CD14-positive monocyte (primary cell): ENCODE measurements at regions of chr19 and their contacts with region 1.

Region 1: DNA sequence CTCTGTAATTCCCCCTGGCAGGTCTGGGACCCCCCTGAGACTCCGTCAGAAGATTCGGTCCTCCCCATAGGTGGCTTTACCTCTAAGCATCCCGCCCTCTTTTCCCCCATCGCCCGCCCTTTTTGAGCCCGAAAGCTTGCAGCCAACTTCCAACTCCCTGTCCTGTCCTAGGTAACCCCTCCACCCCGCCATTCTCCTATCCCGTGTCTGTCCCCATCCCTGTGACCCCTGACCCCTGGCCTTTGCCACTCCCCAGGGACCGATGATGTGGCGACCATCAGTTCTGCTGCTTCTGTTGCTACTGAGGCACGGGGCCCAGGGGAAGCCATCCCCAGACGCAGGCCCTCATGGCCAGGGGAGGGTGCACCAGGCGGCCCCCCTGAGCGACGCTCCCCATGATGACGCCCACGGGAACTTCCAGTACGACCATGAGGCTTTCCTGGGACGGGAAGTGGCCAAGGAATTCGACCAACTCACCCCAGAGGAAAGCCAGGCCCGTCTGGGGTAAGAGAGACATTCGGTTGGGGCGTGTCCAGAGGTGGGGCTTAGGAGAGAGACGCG is 488 bp downstream of the RCN3 start:
- DNase-seq: no peak
- H3K4me3 ChIP-seq: peak overlapping the region in 1 of 3 experiments; percentile 65
- H3K4me3 Mint-ChIP-seq: peak overlapping the region; percentile 62 to 82
- H3K27ac ChIP-seq: no peak overlapping the region
- H3K27ac Mint-ChIP-seq: peak overlapping the region in 2 of 7 donors; percentile 9 to 46
- H3K4me1 ChIP-seq: peaks cover 14 to 20% of the 10 kb centered on the region in 2 donors
- H3K4me1 Mint-ChIP-seq: peaks cover 19% of the 10 kb centered on the region
- H3K27me3 ChIP-seq: no peaks in the 10 kb centered on the region
- H3K27me3 Mint-ChIP-seq: peaks cover 2 to 33% (median 16%) of the 10 kb centered on the region in 3 donors
- CTCF ChIP-seq: no peak

Region 2: DNA sequence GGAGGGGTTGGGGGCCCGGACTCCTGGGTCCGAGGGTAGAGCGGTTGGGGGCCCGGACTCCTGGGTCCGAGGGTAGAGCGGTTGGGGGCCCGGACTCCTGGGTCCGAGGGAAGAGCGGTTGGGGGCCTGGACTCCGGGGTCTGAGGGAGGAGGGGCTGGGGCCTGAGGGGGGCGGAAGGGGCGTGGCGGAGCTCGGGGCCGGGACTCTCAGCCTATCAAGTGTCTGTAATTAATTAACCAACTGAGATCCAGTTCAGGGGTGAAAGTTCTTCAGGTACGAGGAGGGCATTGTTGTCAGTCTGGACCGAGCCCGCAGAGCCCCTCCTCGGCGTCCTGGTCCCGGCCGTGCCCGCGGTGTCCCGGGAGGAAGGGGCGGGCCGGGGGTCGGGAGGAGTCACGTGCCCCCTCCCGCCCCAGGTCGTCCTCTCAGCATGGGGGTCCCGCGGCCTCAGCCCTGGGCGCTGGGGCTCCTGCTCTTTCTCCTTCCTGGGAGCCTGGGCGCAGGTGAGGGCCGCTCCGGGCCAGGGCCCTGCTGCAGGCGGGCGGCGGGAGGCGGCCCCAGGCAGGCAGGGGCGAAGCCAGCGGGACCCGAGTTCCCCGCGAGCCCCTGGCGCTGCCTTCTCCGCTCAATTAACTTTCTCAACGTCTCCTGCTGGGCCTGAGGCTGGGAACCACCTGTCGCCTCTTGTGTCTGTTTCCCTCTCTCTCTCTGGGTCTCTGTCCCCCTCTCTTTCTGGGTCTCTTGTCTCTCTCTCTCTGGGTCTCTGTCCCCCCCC is 15.1 kb before region 1 on chr19:
- intact Hi-C with region 1: loop called in 1 of 2 experiments (anchors 2 kb)
- DNase-seq: no peak
- H3K4me3 ChIP-seq: peak overlapping the region; percentile 84 to 99 (median 90)
- H3K4me3 Mint-ChIP-seq: peak overlapping the region; percentile 96 to 98
- H3K27ac ChIP-seq: peak overlapping the region; percentile 71 to 87
- H3K27ac Mint-ChIP-seq: peak overlapping the region; percentile 70 to 96 (median 95)
- H3K4me1 ChIP-seq: peaks cover 70 to 75% of the 10 kb centered on the region in 2 donors
- H3K4me1 Mint-ChIP-seq: peaks cover 74% of the 10 kb centered on the region
- H3K27me3 ChIP-seq: no peaks in the 10 kb centered on the region
- H3K27me3 Mint-ChIP-seq: peaks cover 4 to 8% (median 6%) of the 10 kb centered on the region in 3 donors
- CTCF ChIP-seq: no peak